Transverse colon (tissue), 4 donors: ENCODE measurements at regions of chr7 and their contacts with region 1.

Region 1: GRCh38 chr7:152574892-152575640 is 100.9 kb downstream of the XRCC2 start:
- DNase-seq: no peak
- H3K4me3 ChIP-seq: no peak overlapping the region
- H3K27ac ChIP-seq: no peak overlapping the region
- H3K4me1 ChIP-seq: no peaks in the 10 kb centered on the region
- H3K27me3 ChIP-seq: no peaks in the 10 kb centered on the region
- CTCF ChIP-seq: no peak
- EP300 ChIP-seq: no peak
- POLR2A ChIP-seq: no peak

Region 2: GRCh38 chr7:152527610-152528032 is 47.4 kb before region 1 on chr7:
- in situ Hi-C with region 1: no loop called
- intact Hi-C with region 1: no loop called
- DNase-seq: no peak
- H3K4me3 ChIP-seq: no peak overlapping the region
- H3K27ac ChIP-seq: no peak overlapping the region
- H3K4me1 ChIP-seq: peaks cover 0 to 4% (median 2%) of the 10 kb centered on the region in 4 donors
- H3K27me3 ChIP-seq: no peaks in the 10 kb centered on the region
- CTCF ChIP-seq: no peak
- EP300 ChIP-seq: no peak
- POLR2A ChIP-seq: no peak

Region 3: DNA sequence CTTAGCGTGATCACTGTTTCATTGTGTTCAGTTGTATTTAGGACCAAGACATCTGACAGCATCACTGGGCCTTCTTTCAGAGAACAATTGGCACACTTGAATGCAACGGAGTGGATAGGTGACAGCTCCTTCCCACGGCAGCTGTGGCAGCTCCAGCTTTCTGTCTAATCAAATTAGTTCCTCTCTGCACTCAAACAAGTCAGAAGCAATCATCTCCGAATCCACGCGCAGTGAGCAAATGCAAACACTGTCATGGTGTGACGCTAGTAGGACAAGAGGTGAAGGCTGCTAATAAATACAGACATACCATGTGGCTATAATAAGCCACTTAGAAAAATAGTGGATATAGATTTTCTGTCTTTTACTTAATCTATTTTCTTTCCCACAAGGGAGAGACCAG is 726.9 kb after region 1 on chr7:
- in situ Hi-C with region 1: no loop called
- intact Hi-C with region 1: loop called (anchors 5 kb)
- DNase-seq: no peak
- H3K4me3 ChIP-seq: no peak overlapping the region
- H3K27ac ChIP-seq: no peak overlapping the region
- H3K4me1 ChIP-seq: no peaks in the 10 kb centered on the region
- H3K27me3 ChIP-seq: no peaks in the 10 kb centered on the region
- CTCF ChIP-seq: no peak
- EP300 ChIP-seq: no peak
- POLR2A ChIP-seq: no peak